ENCODE measurements at regions of chr9 and their contacts with region 1.

Region 1: GRCh38 chr9:70470050-70471015 is 55.9 kb upstream of the KLF9 start:
- DNase-seq: peak; percentile 64
- ATAC-seq: peak; percentile 93

Region 2: DNA sequence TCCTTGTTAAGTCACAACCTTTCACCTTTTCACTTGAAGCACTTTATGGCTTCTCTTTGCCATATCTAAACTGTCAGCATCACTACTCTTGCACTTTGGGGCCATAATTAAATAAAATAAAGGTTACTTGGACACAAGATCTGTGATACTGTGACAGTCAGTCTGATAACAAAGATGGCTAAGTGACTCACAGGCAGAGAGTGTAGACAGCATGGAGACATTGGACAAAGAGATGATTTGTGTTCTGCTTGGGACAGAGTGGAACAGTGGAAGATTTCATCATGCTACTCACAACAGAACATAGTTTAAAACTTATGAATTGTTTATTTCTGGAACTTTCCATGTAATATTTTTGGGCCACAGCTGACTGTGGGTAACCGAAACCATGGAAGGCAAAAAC is 293.2 kb before region 1 on chr9:
- intact Hi-C with region 1: no loop called
- DNase-seq: no peak
- ATAC-seq: no peak

Region 3: GRCh38 chr9:70419546-70420266 is 50.6 kb before region 1 on chr9:
- intact Hi-C with region 1: loop called (anchors 5 kb)
- DNase-seq: peak; percentile 98
- ATAC-seq: peak; percentile 72

Region 4: GRCh38 chr9:70485273-70485858 is 15.0 kb after region 1 on chr9:
- intact Hi-C with region 1: no loop called
- DNase-seq: peak; percentile 73
- ATAC-seq: peak; percentile 63

Measured in left ventricle myocardium superior (tissue), 1 donor.